ENCODE measurements at regions of chr2 and their contacts with region 1.

Region 1: GRCh38 chr2:175855794-175856453 is 146.1 kb downstream of the LNPK start:
- DNase-seq: no peak
- H3K4me3 ChIP-seq: no peak overlapping the region
- H3K27ac ChIP-seq: no peak overlapping the region
- H3K4me1 ChIP-seq: peaks cover 6% of the 10 kb centered on the region
- H3K27me3 ChIP-seq: peaks cover 10% of the 10 kb centered on the region
- CTCF ChIP-seq: no peak

Region 2: GRCh38 chr2:174004905-174005605 is 1850.9 kb before region 1 on chr2:
- CTCF ChIA-PET with region 1: no interaction called
- POLR2A ChIA-PET with region 1: no interaction called
- intact Hi-C with region 1: no loop called
- DNase-seq: no peak
- H3K4me3 ChIP-seq: no peak overlapping the region
- H3K27ac ChIP-seq: no peak overlapping the region
- H3K4me1 ChIP-seq: peaks cover 7% of the 10 kb centered on the region
- H3K27me3 ChIP-seq: no peaks in the 10 kb centered on the region
- CTCF ChIP-seq: no peak

Region 3: GRCh38 chr2:175662335-175662734 is 193.6 kb before region 1 on chr2:
- CTCF ChIA-PET with region 1: no interaction called
- POLR2A ChIA-PET with region 1: no interaction called
- intact Hi-C with region 1: no loop called
- DNase-seq: no peak
- H3K4me3 ChIP-seq: no peak overlapping the region
- H3K27ac ChIP-seq: no peak overlapping the region
- H3K4me1 ChIP-seq: no peaks in the 10 kb centered on the region
- H3K27me3 ChIP-seq: peaks cover 23% of the 10 kb centered on the region
- CTCF ChIP-seq: no peak

Region 4: GRCh38 chr2:175914846-175915245 is 58.9 kb after region 1 on chr2:
- CTCF ChIA-PET with region 1: no interaction called
- POLR2A ChIA-PET with region 1: no interaction called
- intact Hi-C with region 1: loop called (anchors 2 kb)
- DNase-seq: no peak
- H3K4me3 ChIP-seq: no peak overlapping the region
- H3K27ac ChIP-seq: no peak overlapping the region
- H3K4me1 ChIP-seq: no peaks in the 10 kb centered on the region
- H3K27me3 ChIP-seq: peaks cover 2% of the 10 kb centered on the region
- CTCF ChIP-seq: no peak

Region 5: GRCh38 chr2:176902454-176902853 is 1046.5 kb after region 1 on chr2:
- CTCF ChIA-PET with region 1: no interaction called
- POLR2A ChIA-PET with region 1: no interaction called
- intact Hi-C with region 1: no loop called
- DNase-seq: peak; percentile 29
- H3K4me3 ChIP-seq: no peak overlapping the region
- H3K27ac ChIP-seq: no peak overlapping the region
- H3K4me1 ChIP-seq: no peaks in the 10 kb centered on the region
- H3K27me3 ChIP-seq: no peaks in the 10 kb centered on the region
- CTCF ChIP-seq: no peak